ENCODE measurements at regions of chr3 and their contacts with region 1.

Region 1: GRCh38 chr3:4493014-4493940 is at the start of gene ITPR1:
- DNase-seq: peak; percentile 98
- H3K4me3 Mint-ChIP-seq: peak within 1 kb of the TSS; percentile 91
- H3K27ac Mint-ChIP-seq: peak within 1 kb of the TSS; percentile 79
- H3K4me1 Mint-ChIP-seq: peaks cover 41% of the 10 kb centered on the region
- H3K27me3 Mint-ChIP-seq: peaks cover 5% of the 10 kb centered on the region
- total RNA-seq, gene ITPR1: 49.1 to 53.1 TPM

Region 2: GRCh38 chr3:4303187-4304123 is 189.8 kb before region 1 on chr3 and contains the start of gene SETMAR:
- CTCF ChIA-PET with region 1: no interaction called
- POLR2A ChIA-PET with region 1: no interaction called
- intact Hi-C with region 1: loop called (anchors 1 kb)
- DNase-seq: peak; percentile 91
- H3K4me3 Mint-ChIP-seq: peak within 1 kb of the TSS; percentile 93
- H3K27ac Mint-ChIP-seq: peak within 1 kb of the TSS; percentile 96
- H3K4me1 Mint-ChIP-seq: peaks cover 23% of the 10 kb centered on the region
- H3K27me3 Mint-ChIP-seq: no peaks in the 10 kb centered on the region
- total RNA-seq, gene SETMAR: 11.7 to 13.8 TPM

Region 3: DNA sequence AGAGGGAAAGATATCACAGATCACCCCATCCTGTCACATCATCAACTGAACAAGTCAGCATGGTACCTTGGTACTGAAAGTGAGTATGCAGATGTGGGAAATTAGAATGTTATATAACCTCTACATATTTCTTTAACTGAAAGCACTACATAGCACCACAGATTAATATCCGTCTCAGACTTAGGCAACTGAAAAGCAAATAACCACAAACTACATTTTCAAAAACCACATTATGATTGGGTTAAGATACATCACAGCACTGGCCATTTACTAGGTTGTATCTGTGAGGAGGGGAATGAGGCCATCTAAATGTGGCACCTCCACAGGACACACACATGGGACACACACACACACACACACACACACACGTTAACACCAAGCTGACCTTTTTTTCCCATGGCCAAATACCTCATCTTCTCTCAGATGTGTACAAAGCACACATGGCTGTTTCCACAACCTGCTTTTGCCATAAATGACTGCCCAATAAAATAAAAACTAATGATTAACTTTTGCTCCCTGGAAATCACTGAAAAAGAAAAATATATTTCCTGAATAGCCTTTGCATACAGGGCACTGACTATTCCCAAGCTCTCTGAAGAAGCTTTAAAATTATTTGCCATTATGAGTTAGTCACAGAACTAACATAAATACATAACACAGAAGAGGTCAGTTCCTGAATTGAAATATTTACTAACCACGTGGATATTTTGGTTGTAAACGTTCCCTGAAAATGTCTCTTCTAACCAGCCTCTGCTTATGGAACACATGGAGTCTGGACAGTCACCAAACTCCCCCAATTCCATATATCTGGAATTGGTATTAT is 86.3 kb before region 1 on chr3:
- CTCF ChIA-PET with region 1: interaction called, 3 read pairs
- POLR2A ChIA-PET with region 1: interaction called, 8 read pairs
- intact Hi-C with region 1: loop called (anchors 1 kb)
- DNase-seq: no peak
- H3K4me3 Mint-ChIP-seq: no peak overlapping the region
- H3K27ac Mint-ChIP-seq: no peak overlapping the region
- H3K4me1 Mint-ChIP-seq: peaks cover 47% of the 10 kb centered on the region
- H3K27me3 Mint-ChIP-seq: no peaks in the 10 kb centered on the region

Region 4: DNA sequence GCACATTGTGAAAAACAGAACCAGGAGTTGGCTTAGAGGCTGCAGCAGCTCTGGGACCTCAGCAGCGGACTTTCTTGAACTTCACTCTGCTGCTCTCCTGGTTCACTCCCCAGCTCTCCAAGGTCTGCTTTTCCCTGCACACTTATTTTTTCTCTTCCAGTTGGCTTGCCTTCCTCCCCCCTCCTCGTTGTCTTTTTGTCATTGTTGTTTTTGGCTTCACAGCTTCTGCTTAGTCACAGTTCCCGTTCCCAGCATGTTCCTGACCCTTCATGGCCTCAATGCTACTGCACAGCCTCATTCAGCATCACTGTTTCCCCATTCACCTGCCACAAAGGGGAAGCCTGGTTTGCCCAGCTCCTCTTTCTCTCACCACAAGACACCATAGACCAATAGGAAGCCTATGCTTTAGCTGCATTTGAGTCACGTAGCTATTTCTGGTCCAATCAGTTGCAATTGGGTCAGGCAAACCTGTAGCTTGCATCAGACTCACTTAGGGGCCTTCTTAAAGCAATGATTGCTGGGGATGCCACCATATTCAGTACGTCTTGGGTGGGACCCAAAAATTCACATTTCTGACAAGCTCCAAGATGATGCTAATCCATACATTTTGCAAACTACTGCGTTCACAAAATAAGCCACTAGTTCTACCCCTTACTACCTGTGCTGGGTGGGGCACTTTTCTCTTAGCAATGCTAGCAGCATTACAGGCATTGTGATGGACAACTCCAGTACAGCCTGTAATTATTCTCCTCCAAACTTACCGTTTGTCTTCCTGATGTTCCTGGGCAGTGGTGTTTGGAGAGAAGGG is 18.4 kb before region 1 on chr3:
- CTCF ChIA-PET with region 1: no interaction called
- POLR2A ChIA-PET with region 1: interaction called, 8 read pairs
- intact Hi-C with region 1: loop called (anchors 1 kb)
- DNase-seq: peak; percentile 70
- H3K4me3 Mint-ChIP-seq: peak overlapping the region; percentile 14
- H3K27ac Mint-ChIP-seq: peak overlapping the region; percentile 14
- H3K4me1 Mint-ChIP-seq: peaks cover 9% of the 10 kb centered on the region
- H3K27me3 Mint-ChIP-seq: peaks cover 18% of the 10 kb centered on the region

Region 5: DNA sequence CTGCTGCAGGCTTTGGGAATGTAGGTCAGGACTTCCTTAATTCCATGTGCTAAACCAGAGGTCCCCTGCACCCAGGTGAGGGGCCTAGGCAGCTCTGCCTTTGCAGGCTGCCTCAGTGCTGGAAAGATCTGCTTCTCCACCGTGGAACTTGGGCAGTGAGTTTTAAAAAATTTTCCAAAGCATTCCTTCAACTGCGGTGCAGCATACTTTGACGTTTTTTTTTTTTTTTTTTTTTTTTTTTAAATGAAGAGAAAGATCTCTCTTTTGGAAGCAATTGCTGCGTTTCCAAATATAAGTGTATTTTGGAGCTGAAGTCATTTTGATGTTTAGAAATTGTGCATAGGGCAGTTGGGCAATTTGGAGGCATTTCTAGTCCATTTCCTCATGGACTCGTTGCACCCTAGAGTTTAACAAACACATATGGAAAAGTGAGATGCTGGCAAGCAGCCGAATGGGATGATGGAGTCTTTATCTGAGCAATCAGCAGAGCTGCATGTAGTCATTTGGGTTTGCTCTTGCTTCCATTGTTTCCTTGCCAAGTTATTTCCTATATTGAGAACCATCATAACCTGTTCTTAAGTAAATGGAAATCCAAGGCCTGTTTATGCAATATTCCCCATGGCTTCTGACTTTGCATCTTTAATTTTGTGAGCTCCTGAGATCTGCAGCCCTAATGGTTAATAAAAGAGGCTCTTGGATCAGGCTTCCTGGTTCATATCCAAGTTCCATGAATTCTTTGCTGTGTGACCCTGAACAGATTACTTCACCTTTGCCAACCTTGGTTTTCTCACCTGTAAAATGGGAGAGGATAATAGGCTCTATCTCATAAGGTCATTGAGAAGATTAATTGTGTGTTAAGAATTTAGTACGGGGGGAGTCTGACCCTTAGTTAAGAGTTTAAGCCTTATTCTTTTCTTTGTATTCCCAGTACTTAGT is 31.1 kb after region 1 on chr3:
- CTCF ChIA-PET with region 1: interaction called, 8 read pairs
- POLR2A ChIA-PET with region 1: interaction called, 28 read pairs
- intact Hi-C with region 1: loop called (anchors 1 kb)
- DNase-seq: no peak
- H3K4me3 Mint-ChIP-seq: no peak overlapping the region
- H3K27ac Mint-ChIP-seq: no peak overlapping the region
- H3K4me1 Mint-ChIP-seq: peaks cover 5% of the 10 kb centered on the region
- H3K27me3 Mint-ChIP-seq: no peaks in the 10 kb centered on the region

Region 6: DNA sequence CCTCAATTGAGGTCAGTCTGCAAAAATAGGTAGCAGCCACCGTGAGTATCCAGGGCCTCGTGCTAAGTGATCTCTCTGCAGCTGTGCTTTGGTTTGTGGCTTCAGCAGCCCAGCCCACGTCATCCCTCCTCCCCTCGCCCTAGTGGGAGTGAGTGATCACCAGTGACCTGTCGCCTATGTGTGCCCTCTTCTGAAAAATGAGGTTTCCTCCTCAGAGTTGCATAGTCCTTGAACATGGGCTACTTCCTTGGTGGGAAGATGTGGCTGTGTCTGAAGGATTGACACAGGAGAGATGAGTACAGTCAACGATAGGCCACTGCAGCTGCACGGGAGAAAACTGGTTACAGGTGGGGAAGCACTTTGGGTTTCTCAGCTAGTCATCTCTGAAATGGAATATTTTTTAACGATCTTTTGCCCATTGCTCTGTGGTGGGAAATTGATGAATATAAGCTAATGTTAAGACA is 341.2 kb after region 1 on chr3:
- CTCF ChIA-PET with region 1: no interaction called
- POLR2A ChIA-PET with region 1: no interaction called
- intact Hi-C with region 1: loop called (anchors 10 kb)
- DNase-seq: peak; percentile 90
- H3K4me3 Mint-ChIP-seq: peak overlapping the region; percentile 49
- H3K27ac Mint-ChIP-seq: peak overlapping the region; percentile 84
- H3K4me1 Mint-ChIP-seq: peaks cover 86% of the 10 kb centered on the region
- H3K27me3 Mint-ChIP-seq: no peaks in the 10 kb centered on the region